ENCODE measurements at regions of chr2 and their contacts with region 1.

Region 1: DNA sequence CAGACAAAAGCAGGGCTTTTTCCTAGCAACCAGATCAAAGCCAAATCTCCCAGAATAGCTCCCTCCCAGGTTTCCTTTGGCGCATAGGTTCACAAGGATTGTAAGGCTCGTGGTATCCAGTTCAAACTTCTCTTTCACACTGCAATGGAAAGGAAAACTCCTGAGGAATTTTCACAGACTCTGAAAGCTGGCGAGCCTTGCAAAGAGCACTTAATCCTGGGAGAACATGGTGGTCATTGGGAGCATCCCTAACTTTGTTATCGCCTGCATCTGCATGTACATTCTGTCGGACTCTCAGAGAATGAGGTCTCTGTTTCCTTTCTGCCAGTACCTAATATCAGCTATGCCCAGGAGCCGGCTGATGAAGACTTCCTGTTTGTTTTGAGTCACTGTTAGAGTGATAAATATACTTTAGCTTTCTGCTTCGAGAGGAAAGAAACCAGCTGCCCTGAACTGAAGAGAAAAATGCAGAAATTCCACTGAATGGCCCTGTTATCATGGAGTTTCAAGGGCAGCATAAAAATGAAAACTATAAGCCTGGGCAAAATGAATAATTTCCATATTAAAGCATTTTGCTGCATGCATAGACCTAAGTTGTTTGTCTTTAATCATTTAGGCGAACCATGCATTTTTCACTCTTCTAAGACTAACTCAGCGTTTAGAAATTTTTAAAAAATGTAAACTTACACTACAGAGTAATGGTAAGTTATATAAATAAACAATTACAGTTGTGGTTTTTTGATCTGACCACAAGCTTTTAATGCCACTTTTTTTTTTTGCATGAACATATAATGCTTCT is 76.4 kb upstream of the ZEB2 start:
- DNase-seq: peak; percentile 89
- H3K4me3 ChIP-seq: no peak overlapping the region
- H3K27ac ChIP-seq: peak overlapping the region; percentile 71
- H3K4me1 ChIP-seq: peaks cover 38% of the 10 kb centered on the region
- H3K27me3 ChIP-seq: no peaks in the 10 kb centered on the region
- CTCF ChIP-seq: no peak
- POLR2A ChIP-seq: no peak

Region 2: DNA sequence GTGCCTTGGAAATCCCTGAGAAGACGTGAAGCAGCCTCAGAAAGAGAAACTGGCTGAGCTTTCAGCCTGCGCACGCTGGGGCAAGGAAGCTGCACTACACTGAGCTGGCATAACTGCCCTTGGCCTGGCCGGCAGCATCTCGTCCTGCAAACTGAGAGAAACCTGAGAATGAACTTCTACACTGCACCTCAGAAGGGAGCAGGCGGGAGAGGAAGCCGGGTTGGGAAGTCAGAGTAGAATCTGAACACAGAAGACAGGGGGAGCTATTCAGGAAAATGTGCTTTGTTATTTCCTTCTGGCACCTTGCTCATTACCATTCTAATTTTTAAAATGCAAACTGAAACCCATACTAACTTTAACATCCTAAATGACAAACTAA is 147.3 kb before region 1 on chr2:
- CTCF ChIA-PET with region 1: no interaction called
- POLR2A ChIA-PET with region 1: no interaction called
- dilution Hi-C with region 1: no loop called
- intact Hi-C with region 1: loop called (anchors 2 kb)
- DNase-seq: no peak
- H3K4me3 ChIP-seq: no peak overlapping the region
- H3K27ac ChIP-seq: no peak overlapping the region
- H3K4me1 ChIP-seq: peaks cover 26% of the 10 kb centered on the region
- H3K27me3 ChIP-seq: no peaks in the 10 kb centered on the region
- CTCF ChIP-seq: peak; percentile 8 to 12
- POLR2A ChIP-seq: no peak

Region 3: GRCh38 chr2:144583741-144584453 is 12.4 kb before region 1 on chr2:
- CTCF ChIA-PET with region 1: interaction called, 17 read pairs
- POLR2A ChIA-PET with region 1: interaction called, 3 read pairs
- dilution Hi-C with region 1: no loop called
- intact Hi-C with region 1: loop called (anchors 1 kb)
- DNase-seq: peak; percentile 43
- H3K4me3 ChIP-seq: no peak overlapping the region
- H3K27ac ChIP-seq: no peak overlapping the region
- H3K4me1 ChIP-seq: peaks cover 37% of the 10 kb centered on the region
- H3K27me3 ChIP-seq: no peaks in the 10 kb centered on the region
- CTCF ChIP-seq: no peak
- POLR2A ChIP-seq: no peak

Region 4: GRCh38 chr2:144615866-144616565 is 19.7 kb after region 1 on chr2:
- CTCF ChIA-PET with region 1: no interaction called
- POLR2A ChIA-PET with region 1: no interaction called
- dilution Hi-C with region 1: no loop called
- intact Hi-C with region 1: no loop called
- DNase-seq: peak; percentile 56
- H3K4me3 ChIP-seq: no peak overlapping the region
- H3K27ac ChIP-seq: no peak overlapping the region
- H3K4me1 ChIP-seq: no peaks in the 10 kb centered on the region
- H3K27me3 ChIP-seq: no peaks in the 10 kb centered on the region
- CTCF ChIP-seq: no peak
- POLR2A ChIP-seq: no peak

Region 5: DNA sequence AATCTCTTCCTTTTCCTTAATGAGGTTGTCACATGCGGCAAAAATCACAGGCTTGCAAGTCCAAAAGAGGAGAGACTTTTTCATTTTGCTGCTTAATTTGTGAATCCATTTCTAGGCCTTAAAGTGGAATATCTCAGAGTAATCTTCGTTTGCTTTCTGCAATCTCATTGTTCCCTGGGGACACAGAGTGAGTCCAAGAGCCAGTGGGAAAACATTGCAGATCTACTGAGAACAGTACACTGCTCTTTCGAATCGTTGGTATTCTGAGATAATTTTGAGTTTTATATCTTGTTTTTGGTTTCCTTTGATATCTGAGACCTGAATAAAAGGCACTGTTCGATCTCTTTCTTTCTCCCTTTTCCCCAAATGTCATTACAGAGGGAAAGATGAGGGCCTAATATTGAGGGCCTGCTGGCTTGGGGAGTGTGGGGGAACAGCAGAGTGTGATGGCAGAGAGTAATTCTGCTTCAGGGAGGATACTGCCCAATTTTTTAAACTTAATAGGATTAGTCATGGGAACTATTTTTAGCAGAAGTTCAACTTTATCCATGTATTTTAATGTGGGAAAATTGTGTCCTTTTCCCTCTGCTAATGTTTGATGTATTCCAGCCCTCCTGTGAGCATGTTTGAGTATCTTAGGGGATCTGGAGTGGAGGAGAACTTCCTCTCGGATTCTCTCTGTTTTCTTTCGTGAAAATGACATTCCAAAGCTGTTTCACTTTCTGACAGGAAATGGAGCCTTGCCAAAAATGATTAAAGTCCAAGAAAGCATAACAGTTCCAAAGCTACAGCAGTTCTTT is 341.8 kb after region 1 on chr2:
- CTCF ChIA-PET with region 1: no interaction called
- POLR2A ChIA-PET with region 1: no interaction called
- dilution Hi-C with region 1: no loop called
- intact Hi-C with region 1: loop called (anchors 2 kb)
- DNase-seq: peak; percentile 92
- H3K4me3 ChIP-seq: no peak overlapping the region
- H3K27ac ChIP-seq: peak overlapping the region; percentile 59
- H3K4me1 ChIP-seq: peaks cover 40% of the 10 kb centered on the region
- H3K27me3 ChIP-seq: no peaks in the 10 kb centered on the region
- CTCF ChIP-seq: no peak
- POLR2A ChIP-seq: no peak

Region 6: GRCh38 chr2:145593832-145594614 is 997.8 kb after region 1 on chr2:
- CTCF ChIA-PET with region 1: no interaction called
- POLR2A ChIA-PET with region 1: no interaction called
- dilution Hi-C with region 1: no loop called
- intact Hi-C with region 1: loop called (anchors 5 kb)
- DNase-seq: peak; percentile 87
- H3K4me3 ChIP-seq: no peak overlapping the region
- H3K27ac ChIP-seq: peak overlapping the region; percentile 82
- H3K4me1 ChIP-seq: peaks cover 51% of the 10 kb centered on the region
- H3K27me3 ChIP-seq: no peaks in the 10 kb centered on the region
- CTCF ChIP-seq: peak in 1 of 2 donors; percentile 25
- POLR2A ChIP-seq: no peak

Measured in endothelial cell of umbilical vein (primary cell).